ENCODE measurements at regions of chr19 and their contacts with region 1.

Region 1: GRCh38 chr19:21505459-21506451 is at the start of gene ZNF429:
- DNase-seq: peak; percentile 89 to 96 (median 90)
- H3K4me3 ChIP-seq: peak within 1 kb of the TSS; percentile 89 to 99
- H3K4me3 Mint-ChIP-seq: peak within 1 kb of the TSS; percentile 99 to 100 (median 100)
- H3K27ac ChIP-seq: peak within 1 kb of the TSS; percentile 93
- H3K27ac Mint-ChIP-seq: peak within 1 kb of the TSS; percentile 99 to 100 (median 100)
- H3K4me1 ChIP-seq: peaks cover 24% of the 10 kb centered on the region
- H3K4me1 Mint-ChIP-seq: peaks cover 23 to 50% (median 38%) of the 10 kb centered on the region in 4 donors
- H3K27me3 ChIP-seq: no peaks in the 10 kb centered on the region
- H3K27me3 Mint-ChIP-seq: no peaks in the 10 kb centered on the region
- total RNA-seq, gene ZNF429: 27.9 to 31.9 TPM

Region 2: DNA sequence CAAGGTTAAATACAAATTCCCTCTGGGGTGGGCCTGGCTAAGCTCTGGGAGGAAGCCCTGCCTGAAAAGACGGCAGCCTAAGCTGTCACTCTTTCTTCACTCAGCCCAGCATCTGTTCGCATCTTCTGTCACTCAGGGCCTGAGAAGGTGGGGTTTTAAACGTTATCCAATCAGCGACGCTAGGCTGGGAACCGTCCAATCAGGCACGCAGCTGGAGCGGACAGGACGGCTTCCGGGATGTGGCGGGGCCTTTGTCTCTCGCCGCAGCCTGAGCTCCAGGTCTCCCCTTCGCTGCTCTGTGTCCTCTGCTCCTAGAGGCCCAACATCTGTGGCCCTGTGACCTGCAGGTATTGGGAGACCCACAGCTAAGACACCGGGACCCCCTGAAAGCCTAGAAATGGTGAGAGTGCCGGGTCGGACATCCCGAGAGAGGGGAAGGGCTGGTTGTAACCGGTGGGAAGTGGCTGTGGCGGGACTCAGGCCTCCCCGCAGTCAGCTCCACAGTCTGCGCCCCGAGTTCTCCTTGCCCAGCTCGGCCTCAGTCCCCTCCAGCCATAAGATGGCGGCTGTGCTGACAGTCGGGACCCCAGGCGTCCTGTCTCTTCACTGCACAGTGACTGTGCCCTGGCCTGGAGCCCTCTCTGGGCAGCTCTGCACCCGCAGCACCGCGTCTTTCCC is 363.8 kb before region 1 on chr19 and contains the start of gene ZNF431:
- CTCF ChIA-PET with region 1: no interaction called
- POLR2A ChIA-PET with region 1: interaction called, 10 read pairs
- intact Hi-C with region 1: no loop called
- DNase-seq: peak; percentile 89 to 93 (median 90)
- H3K4me3 ChIP-seq: peak within 1 kb of the TSS; percentile 71 to 94
- H3K4me3 Mint-ChIP-seq: peak within 1 kb of the TSS; percentile 96 to 99 (median 98)
- H3K27ac ChIP-seq: peak within 1 kb of the TSS; percentile 74
- H3K27ac Mint-ChIP-seq: peak within 1 kb of the TSS; percentile 91 to 99 (median 97)
- H3K4me1 ChIP-seq: peaks cover 21% of the 10 kb centered on the region
- H3K4me1 Mint-ChIP-seq: peaks cover 24 to 59% (median 40%) of the 10 kb centered on the region in 4 donors
- H3K27me3 ChIP-seq: no peaks in the 10 kb centered on the region
- H3K27me3 Mint-ChIP-seq: no peaks in the 10 kb centered on the region
- total RNA-seq, gene ZNF431: 32.1 to 34.4 TPM

Region 3: GRCh38 chr19:21396893-21397572 is 108.7 kb before region 1 on chr19 and contains the start of gene ZNF493:
- CTCF ChIA-PET with region 1: interaction called, 5 read pairs
- POLR2A ChIA-PET with region 1: interaction called, 31 read pairs
- intact Hi-C with region 1: loop called (anchors 1 kb)
- DNase-seq: peak; percentile 92 to 95 (median 92)
- H3K4me3 ChIP-seq: peak within 1 kb of the TSS; percentile 10 to 76
- H3K4me3 Mint-ChIP-seq: peak within 1 kb of the TSS; percentile 85 to 99 (median 97)
- H3K27ac ChIP-seq: peak within 1 kb of the TSS; percentile 69
- H3K27ac Mint-ChIP-seq: peak within 1 kb of the TSS; percentile 82 to 96 (median 90)
- H3K4me1 ChIP-seq: peaks cover 19% of the 10 kb centered on the region
- H3K4me1 Mint-ChIP-seq: peaks cover 18 to 44% (median 30%) of the 10 kb centered on the region in 4 donors
- H3K27me3 ChIP-seq: no peaks in the 10 kb centered on the region
- H3K27me3 Mint-ChIP-seq: no peaks in the 10 kb centered on the region
- total RNA-seq, gene ZNF493: 57.4 to 61.7 TPM

Region 4: DNA sequence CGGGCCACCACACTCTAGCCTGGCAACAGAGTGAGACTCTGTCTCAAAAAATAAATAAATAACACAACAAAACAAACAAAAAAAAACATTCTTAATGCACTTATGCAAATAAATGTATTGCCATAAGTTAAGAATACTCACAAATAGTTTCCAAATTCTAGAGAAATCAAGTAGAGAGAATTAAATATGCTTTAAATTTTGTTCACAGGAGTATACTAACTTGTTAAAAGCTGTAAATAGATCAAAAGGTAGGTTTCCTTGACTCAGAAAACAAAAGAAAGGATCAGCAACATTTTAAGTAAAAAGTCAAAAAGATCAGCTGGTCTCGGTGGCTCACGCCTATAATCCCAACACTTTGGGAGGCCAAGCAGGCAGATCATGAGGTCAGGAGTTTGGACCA is 50.9 kb before region 1 on chr19:
- CTCF ChIA-PET with region 1: no interaction called
- POLR2A ChIA-PET with region 1: no interaction called
- intact Hi-C with region 1: no loop called
- DNase-seq: no peak
- H3K4me3 ChIP-seq: no peak overlapping the region
- H3K4me3 Mint-ChIP-seq: no peak overlapping the region
- H3K27ac ChIP-seq: no peak overlapping the region
- H3K27ac Mint-ChIP-seq: no peak overlapping the region
- H3K4me1 ChIP-seq: no peaks in the 10 kb centered on the region
- H3K4me1 Mint-ChIP-seq: no peaks in the 10 kb centered on the region
- H3K27me3 ChIP-seq: no peaks in the 10 kb centered on the region
- H3K27me3 Mint-ChIP-seq: no peaks in the 10 kb centered on the region

Region 5: DNA sequence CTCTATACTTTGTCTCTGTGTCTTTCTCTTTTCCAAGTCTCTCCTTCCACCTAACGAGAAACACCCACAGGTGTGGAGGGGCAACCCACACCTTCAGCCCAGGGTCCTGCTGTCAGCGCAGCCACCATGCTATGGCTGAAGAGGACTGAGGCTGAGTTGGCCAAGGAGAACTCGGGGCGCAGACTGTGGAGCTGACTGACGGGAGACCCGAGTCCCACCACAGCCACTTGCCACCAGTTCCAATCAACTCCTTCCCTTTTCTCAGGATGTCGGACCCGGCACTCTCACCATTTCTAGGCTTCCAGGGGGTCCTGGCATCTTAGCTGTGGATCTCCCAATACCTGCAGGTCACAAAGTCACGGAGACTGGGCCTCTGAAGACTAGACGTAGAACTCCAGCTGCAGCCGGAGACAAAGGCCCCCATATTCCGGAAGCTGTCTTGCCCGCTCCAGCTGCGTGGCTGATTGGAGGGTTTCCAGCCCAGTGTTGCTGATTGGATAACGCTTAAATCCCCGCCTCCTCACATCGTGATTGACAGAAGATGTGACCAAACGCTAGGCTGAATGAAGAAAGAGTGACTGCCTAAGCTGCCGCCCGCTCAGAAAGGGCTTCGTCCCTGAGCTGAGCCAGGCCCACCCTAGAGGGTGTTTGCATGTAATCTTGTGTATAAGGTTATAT is 63.2 kb after region 1 on chr19:
- CTCF ChIA-PET with region 1: interaction called, 9 read pairs
- POLR2A ChIA-PET with region 1: interaction called, 60 read pairs
- intact Hi-C with region 1: loop called (anchors 1 kb)
- DNase-seq: peak; percentile 85 to 94 (median 88)
- H3K4me3 ChIP-seq: peak overlapping the region in 1 of 2 donors; percentile 36
- H3K4me3 Mint-ChIP-seq: peak overlapping the region; percentile 89 to 100 (median 96)
- H3K27ac ChIP-seq: peak overlapping the region; percentile 48
- H3K27ac Mint-ChIP-seq: peak overlapping the region; percentile 88 to 99 (median 97)
- H3K4me1 ChIP-seq: no peaks in the 10 kb centered on the region
- H3K4me1 Mint-ChIP-seq: peaks cover 7 to 34% (median 19%) of the 10 kb centered on the region in 4 donors
- H3K27me3 ChIP-seq: no peaks in the 10 kb centered on the region
- H3K27me3 Mint-ChIP-seq: no peaks in the 10 kb centered on the region

Region 6: DNA sequence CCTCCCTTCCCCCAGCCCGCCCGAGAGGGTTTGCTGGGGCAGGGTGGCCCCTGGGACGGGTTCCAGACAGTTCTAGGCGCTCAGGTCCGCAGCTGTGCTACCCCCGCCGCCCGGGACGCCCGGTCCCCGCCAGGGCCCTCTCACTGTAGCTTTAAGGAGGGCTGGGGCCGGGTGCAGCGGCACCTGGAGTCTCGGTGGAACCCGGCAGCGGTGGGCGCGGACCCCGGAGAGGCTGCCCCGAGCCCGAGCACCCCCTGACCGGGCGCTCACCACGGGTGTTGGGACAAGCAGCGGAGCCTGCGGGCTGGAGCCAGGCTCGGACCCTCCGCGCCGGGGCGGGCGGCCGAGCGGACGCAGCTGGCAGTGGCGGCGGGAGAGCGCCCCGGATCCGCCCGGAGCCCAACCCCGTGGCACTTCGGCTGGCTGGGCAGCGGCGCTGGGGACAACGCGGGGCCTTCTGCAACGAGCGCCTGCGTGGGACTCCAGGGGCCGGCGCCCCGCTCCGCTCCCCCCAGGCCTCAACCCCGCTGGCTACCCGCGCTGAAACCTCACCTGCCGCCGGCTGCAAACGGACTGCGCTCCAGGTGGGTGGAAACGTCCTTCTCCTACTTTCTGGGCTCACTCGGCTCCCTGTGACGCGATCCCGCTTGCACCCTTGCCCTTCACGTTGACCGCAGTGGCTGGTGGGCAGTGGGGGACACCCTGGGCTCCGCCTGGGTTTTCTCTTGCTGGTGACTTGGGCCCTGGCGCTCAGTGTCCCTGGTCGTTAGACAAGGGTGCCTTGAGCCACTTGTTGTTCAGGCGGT is 80.8 kb after region 1 on chr19:
- CTCF ChIA-PET with region 1: interaction called, 3 read pairs
- POLR2A ChIA-PET with region 1: interaction called, 19 read pairs
- intact Hi-C with region 1: no loop called
- DNase-seq: no peak
- H3K4me3 ChIP-seq: no peak overlapping the region
- H3K4me3 Mint-ChIP-seq: peak overlapping the region in 7 of 8 donors; percentile 56 to 86 (median 67)
- H3K27ac ChIP-seq: no peak overlapping the region
- H3K27ac Mint-ChIP-seq: peak overlapping the region in 2 of 7 donors; percentile 38 to 68
- H3K4me1 ChIP-seq: peaks cover 15% of the 10 kb centered on the region
- H3K4me1 Mint-ChIP-seq: peaks cover 8 to 38% (median 13%) of the 10 kb centered on the region in 4 donors
- H3K27me3 ChIP-seq: no peaks in the 10 kb centered on the region
- H3K27me3 Mint-ChIP-seq: peaks cover 2 to 6% of the 10 kb centered on the region in 2 donors

Region 7: GRCh38 chr19:21767065-21767800 is 261.5 kb after region 1 on chr19 and contains the start of gene ZNF100:
- CTCF ChIA-PET with region 1: interaction called, 3 read pairs
- POLR2A ChIA-PET with region 1: interaction called, 14 read pairs
- intact Hi-C with region 1: loop called (anchors 2 kb)
- DNase-seq: peak; percentile 82 to 91 (median 84)
- H3K4me3 ChIP-seq: peak within 1 kb of the TSS; percentile 79 to 84
- H3K4me3 Mint-ChIP-seq: peak within 1 kb of the TSS; percentile 96 to 99 (median 97)
- H3K27ac ChIP-seq: peak within 1 kb of the TSS; percentile 62
- H3K27ac Mint-ChIP-seq: peak within 1 kb of the TSS; percentile 73 to 98 (median 96)
- H3K4me1 ChIP-seq: peaks cover 12% of the 10 kb centered on the region
- H3K4me1 Mint-ChIP-seq: peaks cover 13 to 36% (median 21%) of the 10 kb centered on the region in 4 donors
- H3K27me3 ChIP-seq: no peaks in the 10 kb centered on the region
- H3K27me3 Mint-ChIP-seq: no peaks in the 10 kb centered on the region
- total RNA-seq, gene ZNF100: 15.9 to 16.0 TPM

Measured in CD4-positive, alpha-beta memory T cell (primary cell).